Heart left ventricle (tissue), 16 donors: ENCODE measurements at regions of chr3 and their contacts with region 1.

Region 1: DNA sequence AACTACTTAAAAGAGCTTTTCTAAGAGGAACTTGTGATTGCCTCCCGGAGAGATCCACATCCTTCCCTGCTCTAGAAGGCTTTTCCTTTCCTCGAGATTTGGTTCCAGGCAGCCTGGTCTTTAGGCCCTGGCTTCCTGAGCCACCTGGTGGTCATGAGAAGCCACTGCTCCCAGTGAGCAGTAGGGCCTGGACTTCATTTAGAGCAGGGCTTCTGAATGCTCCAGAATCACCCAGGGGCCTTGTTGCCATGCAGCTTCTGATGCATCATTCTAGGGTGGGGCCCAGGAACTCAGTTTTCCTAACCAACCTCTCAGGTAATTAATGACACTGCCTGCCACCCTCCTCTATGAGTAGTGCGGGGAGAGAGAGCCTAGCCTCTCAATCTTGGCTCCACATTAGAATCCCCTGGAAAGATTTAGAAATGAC is 29.6 kb downstream of the PSMD6 start:
- DNase-seq: peak; percentile 65 to 73 (median 68)
- ATAC-seq: peak; percentile 59 to 92 (median 90)
- H3K4me3 ChIP-seq: no peak overlapping the region
- H3K27ac ChIP-seq: no peak overlapping the region
- H3K4me1 ChIP-seq: peaks cover 0 to 21% (median 0%) of the 10 kb centered on the region in 12 donors
- H3K27me3 ChIP-seq: no peaks in the 10 kb centered on the region
- CTCF ChIP-seq: peak; percentile 83 to 97 (median 90)
- POLR2A ChIP-seq: no peak

Region 2: DNA sequence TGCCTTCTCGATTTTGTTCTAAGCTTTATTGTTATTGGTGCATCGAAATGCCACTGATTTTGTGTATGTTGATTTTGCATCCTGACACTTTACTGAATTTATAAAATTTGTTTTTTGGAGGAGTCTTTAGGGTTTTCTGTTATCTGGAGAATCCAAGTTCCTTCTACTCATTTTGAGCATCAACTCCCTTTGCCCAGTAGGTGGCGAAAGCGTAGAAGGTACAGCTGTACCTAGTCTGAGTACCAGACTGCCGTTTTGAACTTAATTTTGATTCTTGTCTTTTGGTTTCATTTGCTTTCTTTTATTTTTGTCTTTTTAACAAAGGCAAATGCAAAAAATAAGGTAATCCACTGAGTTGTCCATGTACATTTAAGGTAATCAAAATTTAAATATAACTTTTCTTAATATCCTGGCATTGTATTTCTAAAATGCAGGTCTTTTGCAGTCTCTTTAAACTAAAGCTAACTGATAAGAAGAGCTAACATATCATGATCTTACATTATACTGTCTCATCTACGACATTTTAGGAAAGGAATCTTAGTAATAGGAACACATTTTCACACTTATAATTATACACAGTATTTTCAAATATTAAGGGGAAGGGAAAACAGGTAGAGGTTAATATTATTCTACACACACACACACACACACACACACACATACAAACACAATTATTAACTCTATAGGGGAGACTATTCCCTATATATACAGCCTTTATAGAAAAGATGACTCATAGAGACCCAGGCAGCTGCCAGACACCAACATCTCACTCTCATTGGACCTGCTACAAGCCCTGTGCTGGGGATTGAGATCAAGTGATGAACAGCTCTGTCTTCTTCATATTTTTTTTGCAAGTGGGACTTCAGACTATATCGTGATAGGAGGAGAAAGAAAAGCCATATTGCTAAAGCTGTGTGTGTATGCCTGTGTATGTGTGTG is 643.8 kb before region 1 on chr3:
- intact Hi-C with region 1: loop called in 6 of 10 experiments (anchors 5 to 10 kb)
- DNase-seq: peak in 2 of 5 donors; percentile 25 to 29
- ATAC-seq: peak in 2 of 4 donors; percentile 51 to 69
- H3K4me3 ChIP-seq: no peak overlapping the region
- H3K27ac ChIP-seq: no peak overlapping the region
- H3K4me1 ChIP-seq: no peaks in the 10 kb centered on the region
- H3K27me3 ChIP-seq: peaks cover 0 to 19% (median 3%) of the 10 kb centered on the region in 9 donors
- CTCF ChIP-seq: peak; percentile 49 to 78 (median 64)
- POLR2A ChIP-seq: no peak

Region 3: GRCh38 chr3:63863148-63864007 is 130.3 kb before region 1 on chr3 and contains the starts of genes ATXN7 and THOC7:
- intact Hi-C with region 1: loop called in 4 of 10 experiments (anchors 5 to 10 kb)
- DNase-seq: peak; percentile 72 to 87 (median 78)
- ATAC-seq: peak; percentile 45 to 90 (median 84)
- H3K4me3 ChIP-seq: peak within 1 kb of the TSS; percentile 90 to 99 (median 98)
- H3K27ac ChIP-seq: peak within 1 kb of the TSS; percentile 79 to 96 (median 92)
- H3K4me1 ChIP-seq: peaks cover 3 to 22% (median 15%) of the 10 kb centered on the region in 12 donors
- H3K27me3 ChIP-seq: no peaks in the 10 kb centered on the region
- CTCF ChIP-seq: no peak
- POLR2A ChIP-seq: no peak
- total RNA-seq, gene ATXN7: 9.6 to 31.4 (median 21.2) TPM
- total RNA-seq, gene THOC7: 63.6 to 97.0 (median 77.4) TPM

Region 4: DNA sequence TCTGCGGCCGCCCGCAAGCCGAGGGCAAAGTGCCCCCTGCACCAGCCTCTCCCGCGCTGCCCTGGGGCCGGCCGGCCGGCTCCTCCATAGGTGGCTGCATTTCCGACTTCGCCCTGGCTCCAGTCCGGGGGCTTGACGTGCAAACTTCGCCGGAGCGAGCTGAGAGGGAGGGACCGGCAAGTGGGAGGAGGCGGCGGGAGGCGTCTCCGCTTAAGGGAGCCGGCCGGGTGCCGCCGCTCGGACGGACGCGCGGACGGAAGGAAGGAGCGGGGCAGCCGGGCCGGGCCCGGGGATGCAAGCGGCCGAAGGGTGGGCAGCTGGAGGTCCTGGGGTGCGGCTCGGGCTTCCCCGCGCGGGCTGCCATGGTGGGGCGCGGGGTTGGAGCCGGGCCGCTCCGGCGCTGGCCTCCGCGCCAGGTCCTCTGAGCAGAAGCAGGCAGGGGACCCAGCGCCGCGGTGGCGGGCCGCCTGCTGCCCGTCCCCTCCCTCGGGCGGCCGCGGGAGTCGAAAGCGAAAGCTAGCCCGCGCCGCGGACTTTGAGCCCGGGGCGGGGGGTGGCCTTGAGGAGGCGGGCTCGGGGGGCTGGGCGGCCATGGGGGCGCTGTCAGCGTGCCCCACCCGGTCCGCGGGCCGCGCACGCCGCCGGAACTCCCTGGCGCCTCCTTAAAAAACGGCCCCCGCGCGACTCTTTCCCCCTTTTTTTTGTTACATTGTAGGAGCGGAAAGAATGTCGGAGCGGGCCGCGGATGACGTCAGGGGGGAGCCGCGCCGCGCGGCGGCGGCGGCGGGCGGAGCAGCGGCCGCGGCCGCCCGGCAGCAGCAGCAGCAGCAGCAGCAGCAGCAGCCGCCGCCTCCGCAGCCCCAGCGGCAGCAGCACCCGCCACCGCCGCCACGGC is 81.5 kb before region 1 on chr3 and contains the start of gene SCAANT1:
- intact Hi-C with region 1: loop called in 7 of 10 experiments (anchors 2 to 10 kb)
- DNase-seq: peak; percentile 93 to 96 (median 94)
- ATAC-seq: peak; percentile 93 to 96 (median 94)
- H3K4me3 ChIP-seq: peak within 1 kb of the TSS; percentile 71 to 98 (median 83)
- H3K27ac ChIP-seq: peak within 1 kb of the TSS; percentile 96 to 100 (median 99)
- H3K4me1 ChIP-seq: peaks cover 2 to 53% (median 27%) of the 10 kb centered on the region in 12 donors
- H3K27me3 ChIP-seq: no peaks in the 10 kb centered on the region
- CTCF ChIP-seq: peak in 6 of 12 donors; percentile 6 to 27 (median 16)
- POLR2A ChIP-seq: peak in 1 of 2 donors; percentile 68
- total RNA-seq, gene SCAANT1: not detected

Region 5: GRCh38 chr3:63918339-63918737 is 75.3 kb before region 1 on chr3:
- intact Hi-C with region 1: loop called in 7 of 10 experiments (anchors 2 to 10 kb)
- DNase-seq: no peak
- ATAC-seq: no peak
- H3K4me3 ChIP-seq: no peak overlapping the region
- H3K27ac ChIP-seq: no peak overlapping the region
- H3K4me1 ChIP-seq: peaks cover 0 to 59% (median 10%) of the 10 kb centered on the region in 12 donors
- H3K27me3 ChIP-seq: no peaks in the 10 kb centered on the region
- CTCF ChIP-seq: no peak
- POLR2A ChIP-seq: no peak

Region 6: DNA sequence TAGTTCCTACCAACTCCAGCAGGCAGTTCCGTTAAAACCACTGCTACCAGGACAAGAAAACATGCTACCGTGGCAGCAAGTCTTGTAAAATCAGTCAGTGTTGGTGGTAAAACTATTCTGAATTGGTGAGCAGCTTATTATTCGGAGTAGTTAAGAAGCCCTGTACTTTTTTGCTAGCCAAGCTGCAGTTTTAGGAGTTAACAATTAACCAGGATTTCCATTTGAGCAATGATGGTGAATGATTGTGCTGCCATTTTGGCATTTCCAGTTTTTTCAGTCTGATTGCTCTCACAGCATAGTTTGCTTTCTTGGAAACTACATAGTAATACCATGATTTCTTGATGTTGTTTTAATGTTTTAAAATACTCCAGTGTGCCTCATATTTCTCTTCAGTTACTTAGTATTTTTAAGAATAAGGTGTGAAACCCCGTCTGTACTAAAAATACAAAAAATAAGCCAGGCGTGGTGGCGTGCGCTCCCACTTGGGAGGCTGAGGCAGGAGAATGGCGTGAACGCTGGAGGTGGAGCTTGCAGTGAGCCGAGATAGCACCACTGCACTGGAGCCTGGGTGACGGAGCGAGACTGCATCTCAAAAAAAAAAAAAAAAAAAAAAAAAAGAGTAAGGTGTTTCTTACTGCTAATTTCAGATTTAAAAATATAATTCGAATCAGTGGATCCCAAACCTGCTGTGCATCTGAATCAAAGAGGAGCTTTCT is 37.7 kb before region 1 on chr3:
- intact Hi-C with region 1: loop called in 2 of 10 experiments (anchors 5 kb)
- DNase-seq: no peak
- ATAC-seq: no peak
- H3K4me3 ChIP-seq: no peak overlapping the region
- H3K27ac ChIP-seq: no peak overlapping the region
- H3K4me1 ChIP-seq: peaks cover 0 to 43% (median 18%) of the 10 kb centered on the region in 12 donors
- H3K27me3 ChIP-seq: no peaks in the 10 kb centered on the region
- CTCF ChIP-seq: no peak
- POLR2A ChIP-seq: no peak

Region 7: DNA sequence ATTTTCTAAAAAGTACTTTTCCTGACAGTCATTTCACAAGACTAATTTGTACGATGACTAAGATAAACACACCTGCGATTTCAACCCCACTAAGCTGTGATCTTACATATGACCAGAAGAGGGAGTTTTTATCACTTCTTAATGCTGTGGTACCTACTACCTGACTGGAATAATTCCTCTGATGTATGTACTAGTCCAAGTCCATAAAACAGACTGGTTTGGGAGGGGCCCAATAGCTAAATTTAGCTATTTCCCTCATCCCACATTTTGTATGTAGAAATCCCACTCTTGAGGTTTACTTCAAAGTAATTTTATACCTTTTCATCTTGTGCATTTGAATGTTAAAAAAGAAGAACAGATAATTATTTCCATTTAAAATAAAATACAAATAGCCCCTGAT is 31.8 kb before region 1 on chr3:
- intact Hi-C with region 1: loop called in 3 of 10 experiments (anchors 2 to 5 kb)
- DNase-seq: no peak
- ATAC-seq: peak in 3 of 4 donors; percentile 44 to 54 (median 51)
- H3K4me3 ChIP-seq: no peak overlapping the region
- H3K27ac ChIP-seq: no peak overlapping the region
- H3K4me1 ChIP-seq: peaks cover 3 to 57% (median 23%) of the 10 kb centered on the region in 12 donors
- H3K27me3 ChIP-seq: no peaks in the 10 kb centered on the region
- CTCF ChIP-seq: peak; percentile 44 to 70 (median 53)
- POLR2A ChIP-seq: no peak